ENCODE measurements at regions of chr1 and their contacts with region 1.

Region 1: GRCh38 chr1:235527196-235527814 is 23.1 kb upstream of the B3GALNT2 start:
- DNase-seq: no peak
- ATAC-seq: no peak
- H3K4me3 ChIP-seq: no peak overlapping the region
- H3K27ac ChIP-seq: no peak overlapping the region
- H3K4me1 ChIP-seq: no peaks in the 10 kb centered on the region
- H3K27me3 ChIP-seq: no peaks in the 10 kb centered on the region
- CTCF ChIP-seq: no peak
- POLR2A ChIP-seq: no peak

Region 2: GRCh38 chr1:235767795-235768194 is 240.5 kb after region 1 on chr1:
- intact Hi-C with region 1: loop called in 1 of 10 experiments (anchors 5 kb)
- DNase-seq: no peak
- ATAC-seq: no peak
- H3K4me3 ChIP-seq: no peak overlapping the region
- H3K27ac ChIP-seq: no peak overlapping the region
- H3K4me1 ChIP-seq: no peaks in the 10 kb centered on the region
- H3K27me3 ChIP-seq: no peaks in the 10 kb centered on the region
- CTCF ChIP-seq: no peak
- POLR2A ChIP-seq: no peak